ENCODE measurements at regions of chr1 and their contacts with region 1.

Region 1: GRCh38 chr1:147640553-147641165 is 29.7 kb downstream of the ACP6 start:
- DNase-seq: peak; percentile 90
- H3K4me3 Mint-ChIP-seq: no peak overlapping the region
- H3K27ac Mint-ChIP-seq: no peak overlapping the region
- H3K4me1 Mint-ChIP-seq: peaks cover 4% of the 10 kb centered on the region
- H3K27me3 Mint-ChIP-seq: no peaks in the 10 kb centered on the region
- CTCF ChIP-seq: peak; percentile 96

Region 2: GRCh38 chr1:147039916-147040315 is 600.7 kb before region 1 on chr1:
- CTCF ChIA-PET with region 1: no interaction called
- POLR2A ChIA-PET with region 1: no interaction called
- intact Hi-C with region 1: no loop called
- DNase-seq: no peak
- H3K4me3 Mint-ChIP-seq: no peak overlapping the region
- H3K27ac Mint-ChIP-seq: no peak overlapping the region
- H3K4me1 Mint-ChIP-seq: no peaks in the 10 kb centered on the region
- H3K27me3 Mint-ChIP-seq: peaks cover 14% of the 10 kb centered on the region
- CTCF ChIP-seq: no peak

Region 3: DNA sequence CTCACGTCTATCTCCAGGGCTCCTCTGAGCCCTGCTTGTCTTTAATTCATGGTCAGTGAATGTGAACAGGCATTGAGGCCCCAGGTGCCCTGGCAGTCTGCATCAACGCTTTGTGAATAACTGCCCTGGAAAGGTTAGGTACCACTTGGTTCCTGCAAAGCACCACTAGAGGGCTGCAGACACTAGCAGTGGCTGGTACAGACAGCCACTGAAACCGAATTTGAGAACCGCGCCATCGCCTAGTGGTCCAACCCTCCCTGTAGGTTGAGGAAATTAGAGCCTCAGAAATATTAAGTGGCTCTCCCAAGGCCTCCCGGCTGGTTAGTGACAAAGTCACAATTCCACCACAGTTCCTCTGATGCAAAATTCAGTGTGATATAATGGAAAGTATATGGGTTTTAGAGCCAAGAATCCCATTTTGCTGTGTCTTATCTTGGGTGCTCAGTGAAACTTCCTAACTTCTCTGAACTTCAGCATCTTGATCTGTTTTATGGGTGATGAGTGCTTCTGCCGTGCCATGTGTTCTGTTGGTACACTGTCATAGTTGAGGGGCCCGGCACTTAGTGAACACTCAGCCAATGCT is 145.6 kb before region 1 on chr1:
- CTCF ChIA-PET with region 1: interaction called, 63 read pairs
- POLR2A ChIA-PET with region 1: interaction called, 4 read pairs
- intact Hi-C with region 1: loop called (anchors 1 kb)
- DNase-seq: peak; percentile 81
- H3K4me3 Mint-ChIP-seq: no peak overlapping the region
- H3K27ac Mint-ChIP-seq: no peak overlapping the region
- H3K4me1 Mint-ChIP-seq: no peaks in the 10 kb centered on the region
- H3K27me3 Mint-ChIP-seq: peaks cover 60% of the 10 kb centered on the region
- CTCF ChIP-seq: peak; percentile 97

Region 4: GRCh38 chr1:147515046-147515869 is 125.4 kb before region 1 on chr1:
- CTCF ChIA-PET with region 1: interaction called, 53 read pairs
- POLR2A ChIA-PET with region 1: no interaction called
- intact Hi-C with region 1: loop called (anchors 1 kb)
- DNase-seq: peak; percentile 84
- H3K4me3 Mint-ChIP-seq: no peak overlapping the region
- H3K27ac Mint-ChIP-seq: no peak overlapping the region
- H3K4me1 Mint-ChIP-seq: peaks cover 7% of the 10 kb centered on the region
- H3K27me3 Mint-ChIP-seq: no peaks in the 10 kb centered on the region
- CTCF ChIP-seq: peak; percentile 27

Region 5: GRCh38 chr1:147651213-147651865 is 10.7 kb after region 1 on chr1:
- CTCF ChIA-PET with region 1: interaction called, 36 read pairs
- POLR2A ChIA-PET with region 1: no interaction called
- intact Hi-C with region 1: no loop called
- DNase-seq: no peak
- H3K4me3 Mint-ChIP-seq: no peak overlapping the region
- H3K27ac Mint-ChIP-seq: no peak overlapping the region
- H3K4me1 Mint-ChIP-seq: no peaks in the 10 kb centered on the region
- H3K27me3 Mint-ChIP-seq: no peaks in the 10 kb centered on the region
- CTCF ChIP-seq: no peak

Region 6: DNA sequence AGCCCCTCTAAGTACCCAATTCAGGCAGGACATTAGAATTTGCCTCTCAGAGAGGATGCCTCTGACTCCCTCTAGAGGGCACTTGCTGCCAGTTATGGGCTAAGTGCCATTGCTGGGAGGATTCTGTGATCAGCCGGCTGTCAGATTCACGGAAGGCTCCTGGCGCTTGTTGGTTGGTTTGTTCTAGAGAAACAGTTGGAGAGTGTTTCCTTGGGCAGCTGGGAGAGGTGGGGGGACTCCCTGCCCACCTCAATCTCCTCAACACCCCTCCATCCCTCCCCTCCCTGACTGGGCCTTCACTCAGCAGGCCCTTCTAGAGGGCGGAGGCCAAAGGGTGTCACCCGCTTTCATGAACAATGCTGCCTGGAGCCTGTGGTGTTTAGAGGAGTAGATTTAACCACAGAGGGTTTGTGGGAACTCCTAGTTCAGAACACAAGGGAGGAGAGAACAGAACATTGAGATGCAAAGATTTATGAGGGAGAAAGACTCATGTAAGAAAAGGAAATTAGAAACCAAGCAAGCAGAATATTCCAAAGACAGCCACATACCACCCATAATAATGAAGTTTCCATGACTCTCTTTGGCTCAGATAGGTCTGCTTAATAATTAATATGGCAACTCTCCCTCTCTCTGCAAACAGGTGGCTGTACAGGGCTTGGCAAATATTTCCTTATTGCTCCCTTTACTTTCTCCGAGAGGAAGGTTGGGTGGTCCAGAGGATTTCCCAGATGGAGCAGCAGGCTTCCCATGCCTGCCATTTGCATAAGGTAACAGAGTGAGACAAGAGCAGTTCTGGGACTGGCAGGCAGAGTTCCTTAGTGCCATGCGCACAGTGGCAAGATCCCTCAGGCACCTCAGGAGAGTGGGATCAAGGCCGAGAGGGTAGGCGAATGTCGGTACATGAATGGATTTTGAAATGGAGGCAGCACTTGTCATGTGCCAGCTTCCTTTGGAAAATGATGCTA is 59.7 kb after region 1 on chr1:
- CTCF ChIA-PET with region 1: interaction called, 25 read pairs
- POLR2A ChIA-PET with region 1: no interaction called
- intact Hi-C with region 1: loop called (anchors 1 kb)
- DNase-seq: peak; percentile 81
- H3K4me3 Mint-ChIP-seq: no peak overlapping the region
- H3K27ac Mint-ChIP-seq: no peak overlapping the region
- H3K4me1 Mint-ChIP-seq: peaks cover 7% of the 10 kb centered on the region
- H3K27me3 Mint-ChIP-seq: no peaks in the 10 kb centered on the region
- CTCF ChIP-seq: peak; percentile 96

Measured in MCF 10A (cell line).